CD8-positive, alpha-beta T cell (primary cell): ENCODE measurements at regions of chr5 and their contacts with region 1.

Region 1: DNA sequence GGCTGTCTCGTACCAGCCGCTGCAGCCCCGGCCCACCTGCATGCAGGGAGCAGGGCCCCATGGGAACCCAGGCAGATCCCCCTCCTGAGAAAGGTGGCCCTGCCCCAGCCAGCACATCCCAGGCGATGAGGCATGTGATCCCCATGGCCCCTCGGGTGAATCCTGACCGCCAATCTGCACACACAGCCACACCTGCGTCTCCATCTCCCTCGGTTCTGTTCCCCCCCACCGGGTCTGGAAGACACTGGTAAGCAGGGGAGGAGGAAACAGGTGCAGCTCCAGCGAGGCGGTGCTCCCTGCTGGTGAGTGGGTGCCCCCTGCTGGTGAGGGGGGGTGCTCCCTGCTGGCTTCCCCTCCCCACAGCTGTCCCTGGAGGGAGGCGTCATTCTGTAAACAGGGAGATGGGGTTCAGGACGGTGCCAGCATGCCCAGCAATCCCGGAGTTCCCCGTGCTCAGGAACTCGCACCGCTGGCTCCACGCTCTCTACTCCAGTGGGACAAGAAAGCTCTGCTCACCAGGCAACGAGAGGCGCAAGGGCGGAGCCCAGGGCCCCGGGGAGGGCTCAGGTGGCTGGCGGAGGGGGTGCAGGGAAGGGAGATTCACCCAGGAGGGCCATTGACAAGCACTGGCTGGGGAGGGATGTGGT is 28.4 kb upstream of the SLC12A7 start:
- DNase-seq: peak; percentile 55 to 92 (median 79)
- ATAC-seq: peak; percentile 94
- H3K4me3 ChIP-seq: no peak overlapping the region
- H3K4me3 Mint-ChIP-seq: no peak overlapping the region
- H3K27ac ChIP-seq: no peak overlapping the region
- H3K27ac Mint-ChIP-seq: no peak overlapping the region
- H3K4me1 ChIP-seq: peaks cover 8% of the 10 kb centered on the region
- H3K4me1 Mint-ChIP-seq: peaks cover 4% of the 10 kb centered on the region
- H3K27me3 ChIP-seq: no peaks in the 10 kb centered on the region
- H3K27me3 Mint-ChIP-seq: peaks cover 3% of the 10 kb centered on the region
- CTCF ChIP-seq: peak; percentile 79

Region 2: GRCh38 chr5:923281-923873 is 216.9 kb before region 1 on chr5:
- CTCF ChIA-PET with region 1: interaction called, 79 read pairs
- POLR2A ChIA-PET with region 1: interaction called, 4 read pairs
- intact Hi-C with region 1: loop called (anchors 1 kb)
- DNase-seq: peak; percentile 50 to 84 (median 68)
- ATAC-seq: peak; percentile 86
- H3K4me3 ChIP-seq: no peak overlapping the region
- H3K4me3 Mint-ChIP-seq: no peak overlapping the region
- H3K27ac ChIP-seq: no peak overlapping the region
- H3K27ac Mint-ChIP-seq: no peak overlapping the region
- H3K4me1 ChIP-seq: no peaks in the 10 kb centered on the region
- H3K4me1 Mint-ChIP-seq: peaks cover 10% of the 10 kb centered on the region
- H3K27me3 ChIP-seq: peaks cover 8 to 10% of the 10 kb centered on the region in 2 experiments
- H3K27me3 Mint-ChIP-seq: peaks cover 23% of the 10 kb centered on the region
- CTCF ChIP-seq: peak; percentile 69

Region 3: GRCh38 chr5:1004461-1005248 is 135.6 kb before region 1 on chr5:
- CTCF ChIA-PET with region 1: interaction called, 18 read pairs
- POLR2A ChIA-PET with region 1: no interaction called
- intact Hi-C with region 1: loop called (anchors 1 to 2 kb)
- DNase-seq: peak in 8 of 9 experiments; percentile 11 to 70 (median 58)
- ATAC-seq: peak; percentile 53
- H3K4me3 ChIP-seq: peak overlapping the region; percentile 33 to 35
- H3K4me3 Mint-ChIP-seq: peak overlapping the region; percentile 71
- H3K27ac ChIP-seq: no peak overlapping the region
- H3K27ac Mint-ChIP-seq: no peak overlapping the region
- H3K4me1 ChIP-seq: peaks cover 30% of the 10 kb centered on the region
- H3K4me1 Mint-ChIP-seq: peaks cover 19% of the 10 kb centered on the region
- H3K27me3 ChIP-seq: peaks cover 8 to 25% of the 10 kb centered on the region in 2 experiments
- H3K27me3 Mint-ChIP-seq: peaks cover 19% of the 10 kb centered on the region
- CTCF ChIP-seq: no peak

Region 4: GRCh38 chr5:1052641-1053390 is 87.5 kb before region 1 on chr5:
- CTCF ChIA-PET with region 1: interaction called, 29 read pairs
- POLR2A ChIA-PET with region 1: no interaction called
- intact Hi-C with region 1: loop called (anchors 1 kb)
- DNase-seq: peak in 1 of 9 experiments; percentile 21
- ATAC-seq: peak; percentile 15
- H3K4me3 ChIP-seq: no peak overlapping the region
- H3K4me3 Mint-ChIP-seq: no peak overlapping the region
- H3K27ac ChIP-seq: no peak overlapping the region
- H3K27ac Mint-ChIP-seq: no peak overlapping the region
- H3K4me1 ChIP-seq: no peaks in the 10 kb centered on the region
- H3K4me1 Mint-ChIP-seq: peaks cover 2% of the 10 kb centered on the region
- H3K27me3 ChIP-seq: no peaks in the 10 kb centered on the region
- H3K27me3 Mint-ChIP-seq: no peaks in the 10 kb centered on the region
- CTCF ChIP-seq: no peak

Region 5: GRCh38 chr5:1161833-1162229 is 21.5 kb after region 1 on chr5:
- CTCF ChIA-PET with region 1: interaction called, 16 read pairs
- POLR2A ChIA-PET with region 1: no interaction called
- intact Hi-C with region 1: no loop called
- DNase-seq: no peak
- ATAC-seq: no peak
- H3K4me3 ChIP-seq: no peak overlapping the region
- H3K4me3 Mint-ChIP-seq: no peak overlapping the region
- H3K27ac ChIP-seq: no peak overlapping the region
- H3K27ac Mint-ChIP-seq: no peak overlapping the region
- H3K4me1 ChIP-seq: no peaks in the 10 kb centered on the region
- H3K4me1 Mint-ChIP-seq: no peaks in the 10 kb centered on the region
- H3K27me3 ChIP-seq: peaks cover 0 to 6% of the 10 kb centered on the region in 2 experiments
- H3K27me3 Mint-ChIP-seq: peaks cover 26% of the 10 kb centered on the region
- CTCF ChIP-seq: no peak

Region 6: DNA sequence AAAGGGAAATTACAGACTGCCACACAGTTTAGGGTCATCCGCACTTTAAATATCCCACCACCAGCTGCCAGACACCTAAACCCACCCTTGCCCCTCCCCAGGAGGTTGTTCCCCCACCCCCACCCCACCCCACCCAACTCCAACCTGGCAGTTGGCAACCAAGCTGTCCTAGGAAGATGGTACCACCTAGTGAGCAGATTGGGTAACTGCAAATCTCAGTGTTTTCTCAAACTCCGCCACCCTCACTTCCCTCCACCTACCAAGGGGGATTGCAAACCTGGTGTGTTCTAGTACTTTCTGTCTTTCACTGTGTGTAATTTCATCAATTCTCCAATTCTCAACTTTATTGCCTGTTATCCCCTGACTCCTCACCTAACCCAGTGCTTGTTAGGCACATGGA is 1935.0 kb after region 1 on chr5:
- CTCF ChIA-PET with region 1: no interaction called
- POLR2A ChIA-PET with region 1: no interaction called
- intact Hi-C with region 1: no loop called
- DNase-seq: no peak
- ATAC-seq: no peak
- H3K4me3 ChIP-seq: no peak overlapping the region
- H3K4me3 Mint-ChIP-seq: no peak overlapping the region
- H3K27ac ChIP-seq: no peak overlapping the region
- H3K27ac Mint-ChIP-seq: no peak overlapping the region
- H3K4me1 ChIP-seq: no peaks in the 10 kb centered on the region
- H3K4me1 Mint-ChIP-seq: no peaks in the 10 kb centered on the region
- H3K27me3 ChIP-seq: no peaks in the 10 kb centered on the region
- H3K27me3 Mint-ChIP-seq: peaks cover 2% of the 10 kb centered on the region
- CTCF ChIP-seq: no peak